Heart right ventricle (tissue), 16 donors: ENCODE measurements at regions of chr1 and their contacts with region 1.

Region 1: DNA sequence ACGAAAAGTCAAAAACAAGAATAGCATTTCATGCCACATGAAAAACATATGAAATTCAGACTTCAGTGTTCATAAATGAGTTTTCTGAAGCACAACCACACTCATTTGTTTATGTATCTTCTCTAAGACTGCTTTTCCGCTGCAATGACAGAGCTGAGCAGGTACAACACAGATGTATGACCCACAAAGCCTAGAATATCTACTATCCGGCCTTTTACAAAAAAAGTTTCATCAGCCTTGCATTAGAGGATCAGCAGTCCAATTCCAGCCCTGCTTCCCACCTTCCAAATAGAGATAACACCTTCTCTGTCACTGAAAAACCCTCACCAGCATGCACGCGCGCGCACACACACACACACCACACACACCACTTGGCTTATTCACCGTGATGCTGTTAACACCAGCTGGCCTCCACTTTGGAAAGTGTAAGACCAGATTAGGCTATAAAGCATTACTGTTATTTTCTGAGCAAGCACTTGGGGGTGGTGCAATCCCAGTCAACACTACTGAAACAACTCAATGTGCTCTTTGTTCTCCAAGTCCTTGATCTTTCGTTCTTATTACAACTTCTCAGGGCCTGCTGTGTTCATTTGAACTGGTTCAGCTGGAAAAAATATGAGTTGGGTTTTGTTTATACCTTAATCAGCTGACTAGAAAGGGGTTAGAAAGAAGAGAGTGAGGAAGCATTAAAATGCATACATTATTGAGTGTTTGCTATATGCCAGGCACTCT is 90.0 kb downstream of the GLUL start:
- DNase-seq: peak; percentile 37 to 48
- ATAC-seq: peak; percentile 75 to 89 (median 82)
- H3K4me3 ChIP-seq: no peak overlapping the region
- H3K27ac ChIP-seq: peak overlapping the region in 5 of 10 donors; percentile 21 to 58 (median 45)
- H3K4me1 ChIP-seq: peaks cover 0 to 46% (median 5%) of the 10 kb centered on the region in 9 donors
- H3K27me3 ChIP-seq: no peaks in the 10 kb centered on the region
- CTCF ChIP-seq: peak in 3 of 9 donors; percentile 17 to 36 (median 36)

Region 2: GRCh38 chr1:182235952-182236650 is 65.5 kb before region 1 on chr1:
- intact Hi-C with region 1: loop called in 1 of 10 experiments (anchors 10 kb)
- DNase-seq: peak; percentile 28 to 51
- ATAC-seq: peak; percentile 49 to 96 (median 93)
- H3K4me3 ChIP-seq: no peak overlapping the region
- H3K27ac ChIP-seq: peak overlapping the region in 6 of 10 donors; percentile 17 to 71 (median 40)
- H3K4me1 ChIP-seq: peaks cover 0 to 31% (median 4%) of the 10 kb centered on the region in 9 donors
- H3K27me3 ChIP-seq: no peaks in the 10 kb centered on the region
- CTCF ChIP-seq: no peak

Region 3: GRCh38 chr1:182259229-182259872 is 42.3 kb before region 1 on chr1:
- intact Hi-C with region 1: no loop called
- DNase-seq: peak in 1 of 2 donors; percentile 46
- ATAC-seq: peak in 7 of 8 donors; percentile 29 to 77 (median 56)
- H3K4me3 ChIP-seq: no peak overlapping the region
- H3K27ac ChIP-seq: peak overlapping the region in 6 of 10 donors; percentile 4 to 75 (median 28)
- H3K4me1 ChIP-seq: peaks cover 8 to 50% (median 34%) of the 10 kb centered on the region in 9 donors
- H3K27me3 ChIP-seq: no peaks in the 10 kb centered on the region
- CTCF ChIP-seq: no peak

Region 4: GRCh38 chr1:182397771-182398393 is 96.2 kb after region 1 on chr1:
- intact Hi-C with region 1: loop called in 6 of 10 experiments (anchors 2 to 10 kb)
- DNase-seq: no peak
- ATAC-seq: no peak
- H3K4me3 ChIP-seq: no peak overlapping the region
- H3K27ac ChIP-seq: peak overlapping the region in 2 of 10 donors; percentile 4 to 39
- H3K4me1 ChIP-seq: peaks cover 0 to 35% (median 19%) of the 10 kb centered on the region in 9 donors
- H3K27me3 ChIP-seq: no peaks in the 10 kb centered on the region
- CTCF ChIP-seq: no peak

Region 5: DNA sequence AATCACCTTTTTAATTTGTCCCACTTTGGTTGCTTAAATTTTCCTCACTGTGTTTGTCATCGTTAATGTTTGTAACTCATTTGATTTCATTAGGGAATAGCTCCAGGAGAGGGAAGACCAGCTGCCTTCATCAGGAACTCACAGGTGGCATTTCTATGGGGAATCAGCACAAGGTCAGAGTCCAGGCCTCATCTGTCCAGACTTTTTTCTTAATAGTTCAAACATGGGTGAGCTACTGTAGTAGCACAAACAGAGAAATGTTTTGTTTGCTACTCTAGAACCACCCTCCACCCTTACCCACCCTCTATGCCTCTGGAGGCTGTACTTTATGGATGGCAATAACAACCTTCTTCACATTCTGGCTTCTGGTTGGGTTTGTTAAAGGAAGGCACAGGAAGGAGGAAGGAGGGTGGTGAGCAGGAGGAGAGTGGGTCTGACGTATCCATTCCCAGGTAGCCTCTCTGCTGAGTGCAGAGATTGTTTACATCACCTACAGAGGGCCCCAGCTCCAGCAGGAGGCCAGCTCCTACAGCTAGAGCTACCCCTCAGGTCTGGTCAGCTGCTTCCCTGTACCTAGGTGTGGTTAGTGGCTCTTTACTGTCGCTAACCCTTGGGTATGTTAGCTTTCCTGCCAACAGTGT is 106.9 kb after region 1 on chr1:
- intact Hi-C with region 1: no loop called
- DNase-seq: no peak
- ATAC-seq: no peak
- H3K4me3 ChIP-seq: no peak overlapping the region
- H3K27ac ChIP-seq: no peak overlapping the region
- H3K4me1 ChIP-seq: peaks cover 0 to 11% (median 4%) of the 10 kb centered on the region in 9 donors
- H3K27me3 ChIP-seq: peaks cover 0 to 10% (median 6%) of the 10 kb centered on the region in 7 donors
- CTCF ChIP-seq: no peak